ENCODE measurements at regions of chr2 and their contacts with region 1.

Region 1: GRCh38 chr2:148524519-148524919 is 120.0 kb upstream of the EPC2 start:
- DNase-seq: peak; percentile 83
- H3K4me3 Mint-ChIP-seq: peak overlapping the region; percentile 28
- H3K27ac Mint-ChIP-seq: peak overlapping the region; percentile 84
- H3K4me1 Mint-ChIP-seq: peaks cover 79% of the 10 kb centered on the region
- H3K27me3 Mint-ChIP-seq: no peaks in the 10 kb centered on the region

Region 2: DNA sequence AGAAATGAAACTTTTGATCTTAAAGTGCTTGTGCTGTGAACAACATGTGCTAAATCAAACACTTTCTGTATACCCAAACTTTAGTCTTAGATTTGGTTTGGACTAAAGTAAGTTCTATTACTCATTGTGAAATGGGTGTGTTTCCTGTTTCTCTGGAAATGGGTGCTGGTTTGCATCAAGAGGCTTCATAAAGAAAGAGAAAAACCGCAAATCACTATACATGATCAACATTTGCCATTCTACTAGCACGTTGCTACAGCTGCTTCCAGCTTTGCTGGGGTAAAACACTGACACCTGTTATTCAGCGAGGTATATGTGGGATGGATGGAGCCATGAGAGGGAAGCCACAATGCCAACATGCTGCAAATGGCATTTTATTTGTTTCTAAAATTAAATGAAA is 1226.7 kb before region 1 on chr2:
- CTCF ChIA-PET with region 1: interaction called, 3 read pairs
- POLR2A ChIA-PET with region 1: no interaction called
- intact Hi-C with region 1: loop called (anchors 10 kb)
- DNase-seq: peak; percentile 58
- H3K4me3 Mint-ChIP-seq: peak overlapping the region; percentile 39
- H3K27ac Mint-ChIP-seq: peak overlapping the region; percentile 89
- H3K4me1 Mint-ChIP-seq: peaks cover 73% of the 10 kb centered on the region
- H3K27me3 Mint-ChIP-seq: no peaks in the 10 kb centered on the region

Region 3: DNA sequence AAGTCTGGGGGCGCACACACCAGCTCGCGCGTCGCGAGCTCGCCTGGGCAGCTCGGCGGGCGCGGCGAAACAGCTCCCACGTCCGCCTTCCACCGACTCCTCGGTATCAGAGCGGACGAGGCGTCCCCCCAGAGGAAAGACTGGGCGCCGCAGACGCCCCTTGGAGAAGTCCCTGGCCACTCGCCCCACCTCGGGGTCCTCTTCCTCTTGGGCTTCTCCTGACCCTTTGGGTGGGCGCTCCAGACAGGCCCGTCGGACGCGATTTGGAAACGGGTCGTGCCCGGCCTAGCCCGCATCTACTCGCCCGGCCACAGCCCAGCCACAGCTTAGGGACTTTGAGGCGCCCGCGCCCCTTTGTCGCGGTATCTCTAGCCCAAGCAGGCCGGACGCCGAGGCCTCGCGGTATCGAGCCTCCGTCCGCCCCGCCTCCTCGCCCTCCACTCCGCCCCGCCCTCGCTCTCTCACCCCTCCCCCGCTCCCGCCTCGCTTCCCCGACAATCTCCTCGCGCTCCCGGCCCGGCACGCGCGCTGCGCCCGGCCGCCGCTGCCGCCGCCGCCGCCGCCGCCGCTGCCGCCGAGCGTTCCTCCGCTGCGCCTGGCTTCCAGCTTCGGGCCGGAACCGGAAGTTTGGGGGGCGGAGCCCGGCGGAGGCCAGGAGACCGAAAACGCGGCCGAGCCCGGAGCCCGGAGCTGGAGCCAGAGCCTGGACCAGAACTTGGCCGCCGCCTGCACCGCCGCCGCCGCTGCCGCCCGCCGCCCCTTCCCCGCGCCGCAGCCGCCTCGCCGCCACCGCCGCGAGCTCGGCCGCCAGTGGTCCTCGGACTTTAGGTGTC is 680.4 kb before region 1 on chr2:
- CTCF ChIA-PET with region 1: no interaction called
- POLR2A ChIA-PET with region 1: no interaction called
- intact Hi-C with region 1: loop called (anchors 10 kb)
- DNase-seq: peak; percentile 91
- H3K4me3 Mint-ChIP-seq: peak overlapping the region; percentile 89
- H3K27ac Mint-ChIP-seq: peak overlapping the region; percentile 63
- H3K4me1 Mint-ChIP-seq: peaks cover 28% of the 10 kb centered on the region
- H3K27me3 Mint-ChIP-seq: peaks cover 8% of the 10 kb centered on the region

Region 4: DNA sequence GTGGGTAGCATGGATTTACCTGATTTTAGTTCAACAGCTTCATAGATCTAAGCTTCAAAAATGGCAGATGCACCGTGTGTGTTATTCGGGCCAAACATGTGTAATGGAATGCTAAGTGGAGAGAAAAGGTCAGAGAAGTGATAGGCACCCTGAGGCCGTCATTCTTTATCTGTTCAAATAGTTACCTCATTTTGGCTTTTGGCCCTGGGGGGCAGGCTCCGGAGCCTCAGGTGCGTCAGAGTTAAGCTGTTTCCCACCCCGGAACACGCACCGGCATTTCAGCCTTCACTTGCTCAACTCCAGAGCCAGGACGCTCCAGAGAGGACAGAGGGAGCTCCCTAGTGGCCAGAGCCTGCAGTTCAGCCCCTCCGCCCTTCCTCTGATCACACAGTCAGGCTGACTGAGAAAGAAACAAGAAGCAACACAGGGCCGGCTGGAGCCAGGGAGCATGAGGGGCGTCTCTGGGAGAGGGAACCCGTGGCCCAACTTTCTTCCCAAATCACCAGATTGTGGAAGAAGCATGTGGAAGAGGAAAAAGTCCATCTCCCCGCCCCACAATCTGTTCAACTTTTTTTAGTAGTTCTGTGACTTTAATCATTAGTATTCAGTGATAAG is 15.1 kb before region 1 on chr2:
- CTCF ChIA-PET with region 1: interaction called, 44 read pairs
- POLR2A ChIA-PET with region 1: interaction called, 6 read pairs
- intact Hi-C with region 1: loop called (anchors 1 kb)
- DNase-seq: peak; percentile 95
- H3K4me3 Mint-ChIP-seq: peak overlapping the region; percentile 66
- H3K27ac Mint-ChIP-seq: peak overlapping the region; percentile 55
- H3K4me1 Mint-ChIP-seq: peaks cover 18% of the 10 kb centered on the region
- H3K27me3 Mint-ChIP-seq: no peaks in the 10 kb centered on the region

Region 5: DNA sequence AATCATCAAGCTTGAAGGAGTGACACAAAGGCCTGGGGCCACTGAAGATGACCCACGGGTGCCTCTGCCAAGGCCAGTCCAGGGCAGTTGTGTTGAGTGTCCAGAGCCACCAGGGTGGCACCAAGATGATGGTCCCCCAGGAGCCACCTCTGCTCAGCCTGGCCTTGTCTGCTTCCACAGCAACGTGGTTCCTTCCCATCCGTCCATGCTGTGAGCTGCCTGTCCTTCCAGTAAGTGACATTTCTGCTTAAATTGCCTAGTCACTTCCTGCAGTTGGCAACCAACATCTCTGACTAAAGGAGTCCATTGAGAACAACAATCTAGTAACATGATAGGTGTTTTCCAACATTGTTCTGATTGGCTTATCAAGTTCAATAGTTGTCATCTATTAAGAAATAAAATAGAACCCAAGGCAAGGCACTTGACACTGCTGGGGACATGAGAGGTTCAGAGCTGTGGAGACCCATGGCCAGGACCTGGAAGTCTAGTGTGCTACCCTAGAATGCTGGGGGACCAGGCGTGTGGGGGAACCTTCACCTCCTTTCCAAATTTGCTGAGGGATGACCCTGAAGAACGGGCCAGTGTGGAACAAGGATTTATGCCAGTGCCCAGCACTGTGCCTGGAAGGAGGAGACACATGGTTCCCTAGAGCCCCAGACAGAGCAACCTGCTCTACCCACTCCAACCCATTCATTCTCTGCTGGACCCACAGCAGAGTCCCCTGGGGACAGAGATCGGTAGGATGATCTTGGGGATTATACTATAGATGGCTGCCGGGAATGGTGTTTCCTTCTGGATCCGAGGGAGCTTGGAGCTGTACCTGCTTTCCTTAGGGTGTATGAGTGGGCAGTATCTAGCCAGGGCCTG is 21.1 kb after region 1 on chr2:
- CTCF ChIA-PET with region 1: interaction called, 11 read pairs
- POLR2A ChIA-PET with region 1: interaction called, 3 read pairs
- intact Hi-C with region 1: loop called (anchors 1 kb)
- DNase-seq: peak; percentile 60
- H3K4me3 Mint-ChIP-seq: no peak overlapping the region
- H3K27ac Mint-ChIP-seq: peak overlapping the region; percentile 74
- H3K4me1 Mint-ChIP-seq: peaks cover 34% of the 10 kb centered on the region
- H3K27me3 Mint-ChIP-seq: no peaks in the 10 kb centered on the region

Region 6: GRCh38 chr2:148590612-148591011 is 66.1 kb after region 1 on chr2:
- CTCF ChIA-PET with region 1: no interaction called
- POLR2A ChIA-PET with region 1: no interaction called
- intact Hi-C with region 1: loop called (anchors 2 kb)
- DNase-seq: no peak
- H3K4me3 Mint-ChIP-seq: no peak overlapping the region
- H3K27ac Mint-ChIP-seq: no peak overlapping the region
- H3K4me1 Mint-ChIP-seq: no peaks in the 10 kb centered on the region
- H3K27me3 Mint-ChIP-seq: no peaks in the 10 kb centered on the region

Region 7: GRCh38 chr2:148813603-148814065 is 289.1 kb after region 1 on chr2:
- CTCF ChIA-PET with region 1: no interaction called
- POLR2A ChIA-PET with region 1: no interaction called
- intact Hi-C with region 1: loop called (anchors 1 kb)
- DNase-seq: peak; percentile 95
- H3K4me3 Mint-ChIP-seq: no peak overlapping the region
- H3K27ac Mint-ChIP-seq: peak overlapping the region; percentile 29
- H3K4me1 Mint-ChIP-seq: peaks cover 22% of the 10 kb centered on the region
- H3K27me3 Mint-ChIP-seq: peaks cover 11% of the 10 kb centered on the region

Measured in activated CD4-positive, alpha-beta memory T cell treated with anti-CD3 and anti-CD28 coated beads for 36 hours (primary cell).